Adrenal gland (tissue), 19 donors: ENCODE measurements at regions of chr2 and their contacts with region 1.

Region 1: DNA sequence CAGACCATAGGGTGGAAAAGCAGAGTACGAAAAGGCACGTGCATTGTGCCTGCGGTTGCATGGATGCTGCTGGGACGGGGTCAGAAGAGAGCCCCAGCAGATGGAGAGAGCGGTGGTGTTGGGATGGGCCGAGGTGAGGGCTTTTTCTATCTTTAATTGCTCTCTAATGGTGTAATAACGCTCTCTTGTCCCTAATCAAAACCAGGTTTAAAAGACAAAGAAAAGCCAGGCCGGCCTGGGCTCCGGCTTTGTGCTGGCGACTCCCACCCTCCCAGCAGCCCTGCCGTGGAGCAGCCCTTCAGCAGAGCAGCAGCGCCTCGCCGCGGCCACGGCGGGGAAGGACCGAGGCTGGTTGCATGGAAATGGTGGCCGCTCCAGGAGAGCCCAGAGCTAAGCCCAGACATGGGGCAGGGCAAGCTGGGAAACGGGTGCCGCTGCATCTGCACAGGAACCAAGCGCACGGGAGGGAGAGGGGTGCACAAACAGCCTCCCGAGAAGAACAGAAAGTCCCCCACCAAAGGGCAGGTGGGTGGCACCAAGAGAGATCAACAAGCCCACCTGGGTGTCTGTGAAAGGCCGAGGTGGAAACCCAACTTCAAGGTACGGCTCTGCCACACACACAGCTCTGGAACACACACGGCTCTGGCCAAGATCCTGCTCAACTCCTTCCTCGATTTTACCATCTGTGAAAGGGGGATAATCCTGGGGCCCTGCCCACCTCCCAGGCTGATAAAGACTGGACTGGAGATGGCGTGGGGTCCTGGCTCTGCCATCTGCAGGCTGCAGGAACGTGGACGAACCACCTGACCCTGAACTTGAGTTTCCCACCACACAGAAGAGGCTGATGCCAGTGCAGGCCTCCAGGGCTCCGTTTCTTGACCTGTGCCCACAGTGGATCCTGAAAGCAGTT is 15.0 kb downstream of the HS1BP3 start:
- DNase-seq: peak; percentile 86 to 94 (median 90)
- H3K4me3 ChIP-seq: no peak overlapping the region
- H3K27ac ChIP-seq: peak overlapping the region; percentile 1 to 97 (median 61)
- H3K4me1 ChIP-seq: peaks cover 16 to 43% of the 10 kb centered on the region in 2 donors
- H3K27me3 ChIP-seq: no peaks in the 10 kb centered on the region
- CTCF ChIP-seq: peak; percentile 87 to 99 (median 96)
- POLR2A ChIP-seq: no peak

Region 2: DNA sequence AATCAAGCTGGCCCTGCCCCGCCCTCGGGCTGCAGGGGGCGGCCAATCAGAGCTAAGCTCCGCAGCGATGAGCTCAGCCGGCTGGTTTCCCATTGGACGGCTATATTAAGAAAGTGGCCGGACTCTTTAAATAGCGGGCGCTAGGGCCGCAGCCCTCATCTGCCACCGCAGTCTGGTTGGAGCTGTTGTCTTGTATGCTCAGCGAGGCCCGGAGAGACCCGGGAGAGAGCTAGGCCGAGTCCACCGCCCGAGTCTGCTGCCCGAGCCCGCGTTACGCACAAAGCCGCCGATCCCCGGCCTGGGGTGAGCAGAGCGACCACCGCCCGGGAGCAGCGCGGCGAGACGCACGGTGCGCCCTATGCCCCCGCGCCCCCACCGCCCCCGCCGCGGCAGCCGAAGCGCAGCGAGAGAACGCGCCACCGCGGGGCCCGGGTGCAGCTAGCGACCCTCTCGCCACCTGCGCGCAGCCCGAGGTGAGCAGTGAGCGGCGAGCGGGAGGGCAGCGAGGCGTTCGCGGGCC is 189.0 kb before region 1 on chr2 and contains the start of gene RHOB:
- intact Hi-C with region 1: loop called (anchors 2 to 5 kb)
- DNase-seq: peak; percentile 97 to 100 (median 99)
- H3K4me3 ChIP-seq: peak within 1 kb of the TSS; percentile 77 to 99 (median 90)
- H3K27ac ChIP-seq: peak within 1 kb of the TSS; percentile 95 to 99 (median 98)
- H3K4me1 ChIP-seq: peaks cover 40% of the 10 kb centered on the region in 2 donors
- H3K27me3 ChIP-seq: no peaks in the 10 kb centered on the region
- CTCF ChIP-seq: peak in 1 of 6 experiments; percentile 36
- POLR2A ChIP-seq: peak; percentile 100
- total RNA-seq, gene RHOB: 299 to 1,281 (median 728) TPM

Region 3: GRCh38 chr2:20507166-20507692 is 128.7 kb before region 1 on chr2:
- intact Hi-C with region 1: loop called in 1 of 2 experiments (anchors 10 kb)
- DNase-seq: no peak
- H3K4me3 ChIP-seq: no peak overlapping the region
- H3K27ac ChIP-seq: peak overlapping the region in 2 of 5 donors; percentile 17 to 34
- H3K4me1 ChIP-seq: peaks cover 0 to 10% of the 10 kb centered on the region in 2 donors
- H3K27me3 ChIP-seq: no peaks in the 10 kb centered on the region
- CTCF ChIP-seq: no peak
- POLR2A ChIP-seq: no peak

Region 4: GRCh38 chr2:20578895-20579825 is 56.8 kb before region 1 on chr2:
- intact Hi-C with region 1: no loop called
- DNase-seq: peak; percentile 82 to 97 (median 94)
- H3K4me3 ChIP-seq: no peak overlapping the region
- H3K27ac ChIP-seq: peak overlapping the region; percentile 65 to 93 (median 87)
- H3K4me1 ChIP-seq: peaks cover 21 to 53% of the 10 kb centered on the region in 2 donors
- H3K27me3 ChIP-seq: no peaks in the 10 kb centered on the region
- CTCF ChIP-seq: no peak
- POLR2A ChIP-seq: peak; percentile 10 to 13

Region 5: GRCh38 chr2:20838016-20838415 is 202.1 kb after region 1 on chr2:
- intact Hi-C with region 1: no loop called
- DNase-seq: no peak
- H3K4me3 ChIP-seq: no peak overlapping the region
- H3K27ac ChIP-seq: no peak overlapping the region
- H3K4me1 ChIP-seq: no peaks in the 10 kb centered on the region
- H3K27me3 ChIP-seq: peaks cover 6% of the 10 kb centered on the region
- CTCF ChIP-seq: no peak
- POLR2A ChIP-seq: no peak